ENCODE measurements at regions of chr19 and their contacts with region 1.

Region 1: DNA sequence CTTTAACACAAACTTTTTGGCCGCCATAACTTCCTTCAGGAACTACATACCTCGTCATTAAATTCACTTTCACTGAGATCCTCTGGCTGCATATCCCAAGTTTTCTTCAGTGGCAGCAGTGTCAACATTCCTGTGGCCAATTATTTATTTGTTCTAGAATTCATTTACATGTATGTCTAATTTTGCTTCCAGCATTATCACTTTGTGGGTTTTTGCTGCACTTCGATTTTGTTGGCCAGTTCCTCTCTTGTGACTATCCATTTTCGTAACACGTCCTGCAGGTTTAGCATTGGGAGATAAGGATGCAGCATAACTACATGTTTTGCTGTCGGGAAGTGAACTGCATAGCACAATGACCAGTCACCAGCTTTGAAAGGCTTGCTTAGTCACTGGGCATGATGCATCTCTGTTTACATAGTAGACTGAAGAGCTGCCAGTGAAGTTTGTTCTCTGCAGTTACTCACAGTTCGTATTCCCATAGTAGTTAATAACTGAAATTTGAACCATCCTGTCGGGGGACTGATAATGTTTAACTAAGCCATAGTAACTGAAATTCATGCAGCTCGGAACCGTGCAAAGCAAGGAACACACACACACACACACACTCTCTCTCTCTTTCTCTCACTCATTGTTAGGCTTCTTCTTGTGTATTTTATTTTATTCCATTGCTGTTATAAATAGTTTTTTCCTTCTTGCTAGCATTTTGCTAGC is 28.3 kb downstream of the ZNF507 start:
- DNase-seq: peak; percentile 100
- ATAC-seq: peak; percentile 99
- H3K4me3 ChIP-seq: peak overlapping the region; percentile 9 to 50 (median 32); a peak in 4 of 6 replicates
- H3K27ac ChIP-seq: peak overlapping the region; percentile 98
- H3K4me1 ChIP-seq: peaks cover 53% of the 10 kb centered on the region
- H3K27me3 ChIP-seq: no peaks in the 10 kb centered on the region
- CTCF ChIP-seq: no peak
- EP300 ChIP-seq: peak; percentile 85 to 89
- POLR2A ChIP-seq: peak in 1 of 2 experiments; percentile 82; a peak in 2 of 4 replicates
- RAD21 ChIP-seq: 0 out of 2 replicates have a peak, but pooled peaks have one; percentile 15

Region 2: DNA sequence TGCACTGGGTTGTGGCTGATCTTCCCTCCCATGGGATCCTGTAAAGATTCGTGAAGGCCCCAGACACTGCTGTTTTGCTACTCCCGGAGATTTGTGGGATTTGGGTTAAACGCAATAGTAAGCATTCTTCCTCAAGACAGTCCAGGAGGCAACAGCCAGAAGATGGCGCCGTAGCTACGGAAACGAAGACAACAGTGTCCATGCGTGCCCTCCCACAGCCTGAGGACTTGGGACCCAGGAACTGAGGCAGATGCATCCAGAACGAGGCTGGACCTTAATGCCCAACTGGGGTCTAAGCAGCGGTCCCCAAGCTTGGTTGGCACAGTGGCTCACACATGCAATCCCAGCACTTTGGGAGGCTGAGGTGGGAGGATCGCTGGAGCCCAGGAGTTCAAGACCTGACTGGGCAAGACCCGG is 85.9 kb before region 1 on chr19:
- CTCF ChIA-PET with region 1: interaction called, 3 read pairs
- POLR2A ChIA-PET with region 1: no interaction called
- in situ Hi-C with region 1: no loop called
- intact Hi-C with region 1: loop called (anchors 5 kb)
- DNase-seq: peak; percentile 67
- ATAC-seq: peak; percentile 92
- H3K4me3 ChIP-seq: peak overlapping the region; percentile 11 to 51 (median 28); a peak in 3 of 6 replicates
- H3K27ac ChIP-seq: no peak overlapping the region
- H3K4me1 ChIP-seq: peaks cover 9% of the 10 kb centered on the region; the same call in 1 of the 2 replicates
- H3K27me3 ChIP-seq: no peaks in the 10 kb centered on the region; a peak in 2 of 5 replicates
- CTCF ChIP-seq: peak; percentile 95
- EP300 ChIP-seq: no peak
- POLR2A ChIP-seq: no peak
- RAD21 ChIP-seq: peak; percentile 75

Region 3: DNA sequence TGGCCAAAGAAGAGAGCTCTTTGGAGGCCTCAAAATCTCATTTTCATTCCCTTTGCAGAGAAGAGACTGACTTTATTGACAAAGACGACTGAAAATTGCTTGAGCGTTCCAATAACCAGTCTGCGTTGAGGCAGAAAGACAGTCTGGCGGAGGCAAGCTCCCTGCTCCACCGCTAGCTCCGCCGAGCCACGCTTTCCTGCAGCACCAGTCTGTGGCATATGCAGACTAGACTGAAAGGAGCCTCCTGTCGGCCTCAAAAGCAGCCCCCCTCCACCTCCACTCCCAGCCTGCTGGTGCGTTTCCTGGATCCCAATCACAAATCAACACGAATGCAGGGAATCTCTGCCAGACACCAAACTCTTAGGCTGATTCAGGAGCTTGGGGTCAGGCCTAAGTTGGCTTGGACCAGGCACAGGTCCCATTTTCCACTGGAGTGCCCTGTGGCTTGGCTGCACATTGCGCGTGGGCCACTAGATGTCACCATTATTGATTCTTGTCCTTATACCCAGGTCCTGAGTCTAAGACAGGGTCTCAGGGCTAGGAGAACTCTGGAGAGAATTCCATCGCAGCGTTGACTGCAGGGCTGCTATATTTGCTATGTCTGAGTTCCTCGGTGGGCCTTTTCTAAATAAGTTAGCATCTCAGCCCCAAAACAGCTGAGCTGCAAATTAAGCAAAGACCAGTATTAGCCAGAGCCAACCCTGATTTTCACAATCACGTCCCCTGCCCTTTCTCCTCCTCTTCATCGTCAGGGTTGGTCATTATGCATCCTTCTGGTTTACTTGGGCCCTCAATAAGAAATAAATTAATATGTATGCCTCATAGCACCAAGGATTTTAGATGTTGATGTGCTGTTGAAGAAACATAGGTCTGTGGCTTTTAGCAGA is 33.5 kb before region 1 on chr19:
- CTCF ChIA-PET with region 1: interaction called, 3 read pairs
- POLR2A ChIA-PET with region 1: interaction called, 31 read pairs
- in situ Hi-C with region 1: no loop called
- intact Hi-C with region 1: loop called (anchors 1 kb)
- DNase-seq: peak; percentile 46
- ATAC-seq: peak; percentile 87
- H3K4me3 ChIP-seq: no peak overlapping the region; a peak in 1 of 6 replicates
- H3K27ac ChIP-seq: no peak overlapping the region
- H3K4me1 ChIP-seq: peaks cover 46% of the 10 kb centered on the region
- H3K27me3 ChIP-seq: no peaks in the 10 kb centered on the region
- CTCF ChIP-seq: peak; percentile 84
- EP300 ChIP-seq: no peak
- POLR2A ChIP-seq: no peak
- RAD21 ChIP-seq: peak; percentile 56; the same call in 1 of the 2 replicates

Region 4: GRCh38 chr19:32345261-32346207 is 28.2 kb before region 1 on chr19 and contains the start of gene ZNF507:
- CTCF ChIA-PET with region 1: interaction called, 3 read pairs
- POLR2A ChIA-PET with region 1: interaction called, 31 read pairs
- in situ Hi-C with region 1: no loop called
- intact Hi-C with region 1: no loop called
- DNase-seq: peak; percentile 59
- ATAC-seq: peak; percentile 82
- H3K4me3 ChIP-seq: peak within 1 kb of the TSS; percentile 84 to 96 (median 94)
- H3K27ac ChIP-seq: peak within 1 kb of the TSS; percentile 76
- H3K4me1 ChIP-seq: peaks cover 53% of the 10 kb centered on the region
- H3K27me3 ChIP-seq: no peaks in the 10 kb centered on the region; a peak in 1 of 5 replicates
- CTCF ChIP-seq: peak; percentile 13; the same call in 1 of the 2 replicates
- EP300 ChIP-seq: no peak
- POLR2A ChIP-seq: peak; percentile 47 to 58; a peak in 3 of 4 replicates
- RAD21 ChIP-seq: no peak; the same call in 1 of the 2 replicates
- total RNA-seq, gene ZNF507: 7.3 and 16.4 TPM in 2 replicates

Region 5: GRCh38 chr19:32363197-32363596 is 10.5 kb before region 1 on chr19:
- CTCF ChIA-PET with region 1: no interaction called
- POLR2A ChIA-PET with region 1: interaction called, 26 read pairs
- in situ Hi-C with region 1: no loop called
- intact Hi-C with region 1: loop called (anchors 1 kb)
- DNase-seq: peak; percentile 89
- ATAC-seq: peak; percentile 82
- H3K4me3 ChIP-seq: no peak overlapping the region; a peak in 1 of 6 replicates
- H3K27ac ChIP-seq: peak overlapping the region; percentile 70
- H3K4me1 ChIP-seq: peaks cover 50% of the 10 kb centered on the region
- H3K27me3 ChIP-seq: no peaks in the 10 kb centered on the region
- CTCF ChIP-seq: no peak
- EP300 ChIP-seq: peak; percentile 76 to 78; a peak in 3 of 4 replicates
- POLR2A ChIP-seq: no peak
- RAD21 ChIP-seq: no peak

Region 6: DNA sequence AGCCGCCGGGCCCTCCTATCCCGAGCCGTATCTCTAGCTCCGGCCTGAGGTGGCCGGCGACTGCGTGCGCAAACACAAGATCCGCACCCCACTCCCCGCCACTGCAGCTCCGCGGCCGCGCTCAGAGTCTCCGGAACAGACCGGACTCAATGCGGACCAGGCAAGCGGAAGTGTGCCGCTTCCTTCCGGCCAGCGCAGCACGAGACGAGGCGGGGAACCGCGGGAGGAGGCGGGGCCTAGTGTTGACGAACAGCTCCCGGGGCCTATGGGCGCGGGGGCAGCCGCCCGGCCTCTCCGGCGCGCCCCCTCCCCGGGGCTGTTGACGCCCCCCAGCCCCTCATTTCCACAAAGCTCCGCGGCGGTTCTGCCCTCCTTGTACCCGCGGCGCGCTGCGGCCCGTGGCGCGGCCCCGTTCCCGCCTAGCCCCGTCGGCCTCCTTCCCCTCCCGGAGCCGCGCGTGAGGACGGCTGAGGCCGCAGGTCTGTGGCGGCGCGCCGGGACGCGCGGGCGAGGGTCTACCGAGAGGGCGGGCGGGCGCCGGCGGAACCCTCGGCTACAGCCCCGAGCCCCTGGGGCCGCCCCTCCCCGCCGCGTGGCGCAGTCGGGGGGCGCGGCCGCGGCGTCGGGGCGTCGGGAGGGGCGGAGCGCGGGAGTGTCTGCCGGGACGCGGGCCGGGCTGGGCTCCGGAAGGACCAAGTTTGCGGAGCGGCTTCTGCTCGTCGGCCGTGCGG is 31.9 kb after region 1 on chr19 and contains the start of gene DPY19L3:
- CTCF ChIA-PET with region 1: no interaction called
- POLR2A ChIA-PET with region 1: interaction called, 26 read pairs
- in situ Hi-C with region 1: no loop called
- intact Hi-C with region 1: loop called (anchors 5 kb)
- DNase-seq: peak; percentile 88
- ATAC-seq: peak; percentile 96
- H3K4me3 ChIP-seq: peak within 1 kb of the TSS; percentile 82 to 95 (median 90)
- H3K27ac ChIP-seq: peak within 1 kb of the TSS; percentile 95
- H3K4me1 ChIP-seq: peaks cover 37% of the 10 kb centered on the region
- H3K27me3 ChIP-seq: no peaks in the 10 kb centered on the region; a peak in 1 of 5 replicates
- CTCF ChIP-seq: peak; percentile 21
- EP300 ChIP-seq: 0 out of 4 replicates have a peak, but pooled peaks of 1 of the 2 experiments have one; percentile 12
- POLR2A ChIP-seq: peak; percentile 94 to 96
- RAD21 ChIP-seq: no peak; the same call in none of the 2 replicates
- total RNA-seq, gene DPY19L3: 9.8 and 25.2 TPM in 2 replicates